CD8-positive, alpha-beta T cell (primary cell): ENCODE measurements at regions of chr7 and their contacts with region 1.

Region 1: DNA sequence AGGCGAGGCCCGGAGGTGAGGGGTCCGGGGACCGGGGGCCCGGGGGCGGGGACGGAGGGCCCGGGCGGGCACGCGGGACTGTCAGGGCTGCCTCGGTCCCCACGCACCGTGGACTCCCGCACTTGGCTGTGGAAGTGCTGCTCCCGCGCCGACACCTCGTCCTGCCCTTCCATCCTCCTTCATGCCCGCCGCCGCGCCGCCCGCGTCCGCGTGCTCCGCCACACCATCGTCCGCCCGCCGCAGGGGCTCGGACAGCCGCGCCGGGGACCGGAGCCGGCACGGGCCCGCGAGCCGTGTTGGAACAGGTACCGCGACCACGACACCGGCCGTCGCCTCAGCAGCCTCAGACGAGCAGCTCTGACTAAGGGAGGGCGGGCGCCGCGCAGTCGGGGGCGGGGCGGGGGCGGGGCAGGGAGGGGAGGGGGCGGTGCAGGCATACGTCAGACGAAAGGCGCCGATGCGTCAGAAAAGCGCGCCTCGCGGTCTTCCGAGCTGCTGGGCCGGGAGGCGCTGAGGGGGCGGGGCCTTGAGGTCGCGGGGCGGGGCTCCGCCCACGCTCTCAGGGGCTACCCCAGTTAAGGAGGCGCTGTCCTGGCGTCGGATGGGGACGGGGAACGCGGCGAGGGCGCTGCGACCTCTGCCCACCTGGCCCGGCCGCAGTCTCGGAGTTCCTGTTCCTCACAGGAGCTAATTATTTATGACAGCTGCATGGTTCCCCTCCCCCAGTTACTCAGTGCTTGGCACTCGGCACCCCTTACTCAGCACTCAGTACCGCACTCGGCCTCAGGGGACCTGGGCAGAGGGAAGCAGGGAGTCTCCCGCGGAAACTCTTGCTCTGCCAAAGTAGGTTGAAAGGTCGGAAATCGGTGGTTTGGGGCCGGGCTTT is at the start of gene LMBR1:
- DNase-seq: peak; percentile 89 to 97 (median 95)
- ATAC-seq: peak; percentile 79
- H3K4me3 ChIP-seq: peak within 1 kb of the TSS; percentile 81 to 91
- H3K4me3 Mint-ChIP-seq: peak within 1 kb of the TSS; percentile 91
- H3K27ac ChIP-seq: peak within 1 kb of the TSS; percentile 84 to 87
- H3K27ac Mint-ChIP-seq: peak within 1 kb of the TSS; percentile 92
- H3K4me1 ChIP-seq: peaks cover 18% of the 10 kb centered on the region
- H3K4me1 Mint-ChIP-seq: peaks cover 48% of the 10 kb centered on the region
- H3K27me3 ChIP-seq: no peaks in the 10 kb centered on the region
- H3K27me3 Mint-ChIP-seq: no peaks in the 10 kb centered on the region
- CTCF ChIP-seq: peak; percentile 60
- total RNA-seq, gene LMBR1: 69.1 to 74.0 TPM

Region 2: GRCh38 chr7:155644178-155644970 is 1248.7 kb before region 1 on chr7 and contains the start of gene RBM33:
- CTCF ChIA-PET with region 1: no interaction called
- POLR2A ChIA-PET with region 1: no interaction called
- intact Hi-C with region 1: loop called in 1 of 2 experiments (anchors 2 kb)
- DNase-seq: peak; percentile 59 to 87 (median 78)
- ATAC-seq: peak; percentile 76
- H3K4me3 ChIP-seq: peak within 1 kb of the TSS; percentile 97 to 98
- H3K4me3 Mint-ChIP-seq: peak within 1 kb of the TSS; percentile 98
- H3K27ac ChIP-seq: peak within 1 kb of the TSS; percentile 82 to 92
- H3K27ac Mint-ChIP-seq: peak within 1 kb of the TSS; percentile 99
- H3K4me1 ChIP-seq: peaks cover 31% of the 10 kb centered on the region
- H3K4me1 Mint-ChIP-seq: peaks cover 52% of the 10 kb centered on the region
- H3K27me3 ChIP-seq: no peaks in the 10 kb centered on the region
- H3K27me3 Mint-ChIP-seq: no peaks in the 10 kb centered on the region
- CTCF ChIP-seq: no peak
- total RNA-seq, gene RBM33: 169 to 184 TPM

Region 3: DNA sequence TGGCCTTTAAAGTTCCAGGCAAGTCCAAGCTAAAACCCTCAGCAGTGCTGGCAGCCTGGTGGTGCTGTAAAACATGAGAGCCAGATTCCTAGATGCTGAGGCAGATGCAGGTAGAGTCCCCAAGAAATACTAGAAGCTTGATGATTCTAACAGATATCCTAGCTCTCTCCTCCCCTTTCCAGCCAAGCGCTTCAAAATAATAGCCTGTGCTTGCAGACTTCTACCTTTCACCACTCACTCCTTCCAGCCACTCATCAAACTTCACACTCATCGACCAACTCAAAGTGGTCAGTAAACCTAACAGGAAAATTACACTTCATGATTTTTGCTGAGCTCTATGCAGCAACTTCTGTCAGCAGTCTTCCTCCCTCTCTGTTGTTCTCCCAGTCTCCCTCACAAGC is 50.3 kb before region 1 on chr7:
- CTCF ChIA-PET with region 1: no interaction called
- POLR2A ChIA-PET with region 1: no interaction called
- intact Hi-C with region 1: loop called in 1 of 2 experiments (anchors 5 kb)
- DNase-seq: no peak
- ATAC-seq: no peak
- H3K4me3 ChIP-seq: no peak overlapping the region
- H3K4me3 Mint-ChIP-seq: no peak overlapping the region
- H3K27ac ChIP-seq: no peak overlapping the region
- H3K27ac Mint-ChIP-seq: no peak overlapping the region
- H3K4me1 ChIP-seq: peaks cover 5% of the 10 kb centered on the region
- H3K4me1 Mint-ChIP-seq: peaks cover 36% of the 10 kb centered on the region
- H3K27me3 ChIP-seq: no peaks in the 10 kb centered on the region
- H3K27me3 Mint-ChIP-seq: no peaks in the 10 kb centered on the region
- CTCF ChIP-seq: no peak

Region 4: DNA sequence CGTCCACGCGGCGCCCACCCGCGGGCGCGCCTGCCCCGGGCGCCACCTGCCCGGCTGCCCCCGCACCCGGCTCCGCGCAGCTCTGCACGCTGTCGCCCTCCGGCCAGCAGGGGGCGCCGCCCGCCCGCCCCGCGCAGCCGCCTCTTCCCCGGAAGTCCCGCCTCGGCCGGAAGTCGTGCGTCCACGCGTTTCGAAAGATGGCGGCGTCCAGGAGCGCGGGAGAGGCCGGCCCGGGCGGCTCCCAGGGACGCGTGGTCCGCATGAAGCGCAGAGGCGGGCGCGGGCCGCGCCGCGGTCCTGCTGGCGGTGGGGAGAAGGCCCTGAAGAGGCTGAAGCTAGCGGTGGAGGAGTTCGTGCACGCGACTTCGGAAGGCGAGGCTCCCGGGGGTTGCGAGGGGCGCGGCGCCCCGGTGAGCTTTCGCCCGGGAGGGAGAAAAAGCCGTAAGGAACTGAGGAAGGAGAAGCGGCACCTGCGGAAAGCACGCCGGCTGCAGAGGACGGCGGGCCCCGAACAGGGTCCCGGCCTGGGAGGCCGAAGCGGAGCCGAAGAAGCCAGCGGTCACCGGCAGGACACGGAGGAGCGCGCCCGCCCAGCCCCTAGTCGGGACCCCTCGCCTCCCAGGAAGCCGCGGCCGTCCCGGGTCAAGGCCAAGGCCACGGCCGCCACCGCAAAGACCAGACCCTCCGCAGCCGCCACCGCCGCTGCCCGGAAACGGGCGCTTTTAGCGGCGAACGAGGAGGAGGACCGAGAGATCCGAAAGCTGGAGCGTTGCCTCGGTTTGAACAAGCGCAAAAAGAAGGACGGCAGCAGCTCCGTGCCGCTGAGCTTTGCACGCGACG is 56.7 kb after region 1 on chr7 and contains the start of gene NOM1:
- CTCF ChIA-PET with region 1: interaction called, 10 read pairs
- POLR2A ChIA-PET with region 1: interaction called, 9 read pairs
- intact Hi-C with region 1: loop called (anchors 1 to 5 kb)
- DNase-seq: peak; percentile 85 to 96 (median 92)
- ATAC-seq: peak; percentile 94
- H3K4me3 ChIP-seq: peak within 1 kb of the TSS; percentile 95 to 97
- H3K4me3 Mint-ChIP-seq: peak within 1 kb of the TSS; percentile 97
- H3K27ac ChIP-seq: peak within 1 kb of the TSS; percentile 64 to 77
- H3K27ac Mint-ChIP-seq: peak within 1 kb of the TSS; percentile 79
- H3K4me1 ChIP-seq: peaks cover 25% of the 10 kb centered on the region
- H3K4me1 Mint-ChIP-seq: peaks cover 32% of the 10 kb centered on the region
- H3K27me3 ChIP-seq: no peaks in the 10 kb centered on the region
- H3K27me3 Mint-ChIP-seq: peaks cover 9% of the 10 kb centered on the region
- CTCF ChIP-seq: peak; percentile 67
- total RNA-seq, gene NOM1: 35.2 to 50.9 TPM

Region 5: GRCh38 chr7:157336383-157337315 is 443.6 kb after region 1 on chr7 and contains the start of gene DNAJB6:
- CTCF ChIA-PET with region 1: no interaction called
- POLR2A ChIA-PET with region 1: interaction called, 3 read pairs
- intact Hi-C with region 1: loop called (anchors 1 to 5 kb)
- DNase-seq: peak; percentile 92 to 99 (median 96)
- ATAC-seq: peak; percentile 83
- H3K4me3 ChIP-seq: peak within 1 kb of the TSS; percentile 80
- H3K4me3 Mint-ChIP-seq: peak within 1 kb of the TSS; percentile 98
- H3K27ac ChIP-seq: peak within 1 kb of the TSS; percentile 71 to 96
- H3K27ac Mint-ChIP-seq: peak within 1 kb of the TSS; percentile 99
- H3K4me1 ChIP-seq: peaks cover 29% of the 10 kb centered on the region
- H3K4me1 Mint-ChIP-seq: peaks cover 41% of the 10 kb centered on the region
- H3K27me3 ChIP-seq: no peaks in the 10 kb centered on the region
- H3K27me3 Mint-ChIP-seq: peaks cover 2% of the 10 kb centered on the region
- CTCF ChIP-seq: no peak
- total RNA-seq, gene DNAJB6: 312 to 335 TPM